Mammary epithelial cell (primary cell): ENCODE measurements at regions of chr11 and their contacts with region 1.

Region 1: GRCh38 chr11:19441752-19442553 is 201.2 kb upstream of the E2F8 start:
- DNase-seq: peak; percentile 97
- H3K4me3 ChIP-seq: no peak overlapping the region
- H3K27ac ChIP-seq: no peak overlapping the region
- H3K4me1 ChIP-seq: peaks cover 24% of the 10 kb centered on the region
- H3K27me3 ChIP-seq: no peaks in the 10 kb centered on the region
- CTCF ChIP-seq: no peak

Region 2: GRCh38 chr11:19240420-19241259 is 201.3 kb before region 1 on chr11 and contains the start of gene E2F8:
- CTCF ChIA-PET with region 1: no interaction called
- dilution Hi-C with region 1: no loop called
- in situ Hi-C with region 1: no loop called
- intact Hi-C with region 1: no loop called
- DNase-seq: peak; percentile 95
- H3K4me3 ChIP-seq: peak within 1 kb of the TSS; percentile 63 to 77 (median 77)
- H3K27ac ChIP-seq: peak within 1 kb of the TSS; percentile 90
- H3K4me1 ChIP-seq: peaks cover 41% of the 10 kb centered on the region
- H3K27me3 ChIP-seq: no peaks in the 10 kb centered on the region
- CTCF ChIP-seq: no peak
- total RNA-seq, gene E2F8: 0.17 to 3.4 TPM

Region 3: GRCh38 chr11:19344751-19345518 is 97.0 kb before region 1 on chr11:
- CTCF ChIA-PET with region 1: no interaction called
- dilution Hi-C with region 1: no loop called
- in situ Hi-C with region 1: no loop called
- intact Hi-C with region 1: loop called (anchors 1 kb)
- DNase-seq: peak; percentile 75
- H3K4me3 ChIP-seq: no peak overlapping the region
- H3K27ac ChIP-seq: no peak overlapping the region
- H3K4me1 ChIP-seq: peaks cover 17% of the 10 kb centered on the region
- H3K27me3 ChIP-seq: peaks cover 50% of the 10 kb centered on the region
- CTCF ChIP-seq: no peak

Region 4: DNA sequence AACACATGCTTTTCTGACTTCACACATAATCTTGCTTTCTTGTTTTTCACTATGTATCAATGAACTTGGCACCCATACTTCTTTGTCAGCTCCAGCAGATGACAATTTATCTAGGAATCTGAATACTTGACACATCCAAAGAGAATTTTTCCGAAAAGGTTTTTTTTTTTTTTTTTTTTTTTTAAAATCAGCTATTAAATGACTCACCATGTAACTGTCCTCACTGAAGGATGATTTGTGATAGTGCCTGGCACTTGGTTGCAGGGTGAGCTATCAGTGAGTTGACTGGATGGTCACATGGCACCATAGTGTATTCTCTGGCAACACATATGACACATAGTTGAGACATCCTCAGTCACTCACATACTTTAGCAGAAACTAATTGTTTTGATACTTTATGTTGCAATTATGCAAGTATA is 67.8 kb before region 1 on chr11:
- CTCF ChIA-PET with region 1: no interaction called
- dilution Hi-C with region 1: no loop called
- in situ Hi-C with region 1: no loop called
- intact Hi-C with region 1: loop called (anchors 2 kb)
- DNase-seq: peak; percentile 93
- H3K4me3 ChIP-seq: no peak overlapping the region
- H3K27ac ChIP-seq: peak overlapping the region; percentile 64
- H3K4me1 ChIP-seq: peaks cover 40% of the 10 kb centered on the region
- H3K27me3 ChIP-seq: no peaks in the 10 kb centered on the region
- CTCF ChIP-seq: no peak

Region 5: DNA sequence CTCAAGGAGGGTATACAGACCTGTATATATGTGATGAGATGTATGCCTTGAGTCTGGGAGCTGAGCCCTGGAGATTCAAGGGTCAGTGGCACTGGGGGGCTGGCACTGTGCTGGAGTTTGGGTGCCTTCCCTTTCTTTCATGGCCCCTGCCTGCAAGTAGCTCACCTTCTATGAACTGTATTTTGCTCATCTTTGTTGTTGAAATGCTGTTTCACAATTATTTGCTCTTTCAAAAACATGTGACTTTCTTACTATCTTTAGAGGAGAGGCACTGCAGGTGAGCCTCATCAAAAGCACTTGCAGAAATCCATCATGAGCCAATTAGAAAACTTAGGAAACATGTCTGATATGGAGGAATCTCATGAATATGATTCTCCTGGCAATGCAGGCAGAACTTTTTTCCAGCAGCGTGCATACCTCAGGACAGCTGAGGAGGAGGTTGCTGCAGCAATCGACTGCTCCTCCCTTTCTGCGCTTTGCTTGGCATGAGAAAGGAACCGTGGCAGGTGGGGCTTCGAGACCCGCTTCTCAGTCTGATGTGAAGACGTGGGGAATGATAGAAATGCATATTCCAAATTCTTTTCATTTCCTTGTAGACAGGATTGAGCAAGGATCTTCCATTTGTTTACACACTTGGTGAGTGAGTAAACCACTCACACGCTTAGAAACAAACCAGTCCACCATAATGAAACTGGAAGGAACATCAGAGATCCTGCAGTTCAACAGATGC is 22.8 kb before region 1 on chr11:
- CTCF ChIA-PET with region 1: no interaction called
- dilution Hi-C with region 1: no loop called
- in situ Hi-C with region 1: no loop called
- intact Hi-C with region 1: no loop called
- DNase-seq: no peak
- H3K4me3 ChIP-seq: no peak overlapping the region
- H3K27ac ChIP-seq: no peak overlapping the region
- H3K4me1 ChIP-seq: no peaks in the 10 kb centered on the region
- H3K27me3 ChIP-seq: no peaks in the 10 kb centered on the region
- CTCF ChIP-seq: no peak